Activated CD4-positive, alpha-beta T cell treated with anti-CD3 and anti-CD28 coated beads, Interleukin-2, amount 10 ng/mL, durations not matched to agents 24 days and 14 days (primary cell): ENCODE measurements at regions of chr6 and their contacts with region 1.

Region 1: DNA sequence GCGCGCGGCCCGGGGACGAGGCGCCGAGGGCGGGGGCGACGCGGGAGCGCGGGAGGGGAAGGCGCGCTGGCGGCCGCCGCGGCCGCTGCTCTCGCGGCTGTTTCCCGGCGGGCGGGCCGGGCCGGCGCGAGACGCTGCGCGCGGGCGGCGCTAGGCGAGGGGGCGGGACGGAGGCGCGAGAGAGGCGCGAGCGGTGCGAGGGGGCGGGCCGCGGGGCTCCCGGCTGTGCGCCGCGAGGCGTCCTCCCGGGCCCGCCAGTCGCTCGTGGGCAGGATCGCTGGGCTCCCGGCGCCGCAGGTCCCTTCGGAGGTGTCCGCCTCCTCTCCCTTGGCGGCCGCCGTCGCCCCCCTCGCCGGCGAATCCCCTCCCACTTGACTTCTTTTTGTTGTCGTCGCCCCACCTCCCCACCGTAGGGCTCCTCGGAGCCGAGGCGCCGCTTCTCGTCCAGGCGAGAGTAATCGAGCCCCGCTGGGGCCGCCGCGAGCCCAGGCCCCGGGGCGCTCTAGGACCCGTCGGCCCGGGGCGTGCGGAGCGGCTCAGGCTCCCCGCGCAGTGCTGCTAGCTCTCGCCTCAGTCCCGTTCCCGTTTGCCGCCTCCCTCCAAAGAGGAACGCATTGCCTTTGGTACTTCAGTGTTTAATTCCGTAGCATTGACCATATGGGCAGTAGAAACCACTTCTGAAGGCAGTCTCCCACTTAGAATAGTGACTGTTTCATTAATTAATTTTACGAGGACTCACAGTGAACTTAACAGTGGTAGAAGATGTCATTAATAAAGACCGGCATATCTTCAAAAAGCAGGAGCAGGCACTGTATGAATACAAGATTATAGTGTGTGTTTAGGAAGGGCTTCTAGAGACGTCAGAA is at the start of gene RANBP9:
- DNase-seq: peak; percentile 96
- H3K4me3 Mint-ChIP-seq: peak within 1 kb of the TSS; percentile 96
- H3K27ac Mint-ChIP-seq: peak within 1 kb of the TSS; percentile 98
- H3K4me1 Mint-ChIP-seq: peaks cover 40% of the 10 kb centered on the region
- H3K27me3 Mint-ChIP-seq: no peaks in the 10 kb centered on the region
- total RNA-seq, gene RANBP9: 52.6 and 56.2 TPM in 2 replicates

Region 2: DNA sequence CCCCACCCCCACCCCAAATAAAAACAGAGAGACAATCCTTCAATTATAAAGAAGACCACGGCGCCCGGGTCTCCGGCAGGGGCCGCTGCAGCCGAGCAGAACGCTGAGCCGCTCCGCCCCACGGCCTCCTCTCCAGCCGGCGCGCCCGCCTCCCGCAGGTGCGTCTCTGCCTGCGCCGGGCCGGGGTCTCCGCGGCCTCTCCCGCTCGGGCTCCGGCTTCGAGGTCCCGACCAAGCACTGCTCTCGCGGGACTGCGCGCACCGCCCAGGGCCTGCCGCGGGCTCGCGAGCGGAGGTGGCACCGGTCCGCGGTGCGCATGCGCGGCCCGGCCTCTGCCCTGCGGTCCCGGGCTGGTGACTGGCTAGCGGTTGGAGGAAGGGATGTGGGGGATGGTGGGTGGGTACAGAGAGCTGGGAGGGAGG is 137.8 kb before region 1 on chr6:
- intact Hi-C with region 1: loop called (anchors 1 kb)
- DNase-seq: peak; percentile 97
- H3K4me3 Mint-ChIP-seq: peak overlapping the region; percentile 97
- H3K27ac Mint-ChIP-seq: peak overlapping the region; percentile 100
- H3K4me1 Mint-ChIP-seq: peaks cover 18% of the 10 kb centered on the region
- H3K27me3 Mint-ChIP-seq: no peaks in the 10 kb centered on the region

Region 3: GRCh38 chr6:13630499-13630898 is 81.5 kb before region 1 on chr6:
- intact Hi-C with region 1: loop called (anchors 5 kb)
- DNase-seq: no peak
- H3K4me3 Mint-ChIP-seq: no peak overlapping the region
- H3K27ac Mint-ChIP-seq: peak overlapping the region; percentile 49
- H3K4me1 Mint-ChIP-seq: peaks cover 14% of the 10 kb centered on the region
- H3K27me3 Mint-ChIP-seq: no peaks in the 10 kb centered on the region

Region 4: GRCh38 chr6:13681305-13682061 is 30.5 kb before region 1 on chr6:
- intact Hi-C with region 1: loop called (anchors 2 kb)
- DNase-seq: peak; percentile 73
- H3K4me3 Mint-ChIP-seq: peak overlapping the region; percentile 60
- H3K27ac Mint-ChIP-seq: peak overlapping the region; percentile 79
- H3K4me1 Mint-ChIP-seq: peaks cover 34% of the 10 kb centered on the region
- H3K27me3 Mint-ChIP-seq: no peaks in the 10 kb centered on the region

Region 5: GRCh38 chr6:13767121-13767808 is 55.3 kb after region 1 on chr6:
- intact Hi-C with region 1: loop called (anchors 1 kb)
- DNase-seq: peak; percentile 63
- H3K4me3 Mint-ChIP-seq: peak overlapping the region; percentile 51
- H3K27ac Mint-ChIP-seq: no peak overlapping the region
- H3K4me1 Mint-ChIP-seq: peaks cover 36% of the 10 kb centered on the region
- H3K27me3 Mint-ChIP-seq: no peaks in the 10 kb centered on the region

Region 6: DNA sequence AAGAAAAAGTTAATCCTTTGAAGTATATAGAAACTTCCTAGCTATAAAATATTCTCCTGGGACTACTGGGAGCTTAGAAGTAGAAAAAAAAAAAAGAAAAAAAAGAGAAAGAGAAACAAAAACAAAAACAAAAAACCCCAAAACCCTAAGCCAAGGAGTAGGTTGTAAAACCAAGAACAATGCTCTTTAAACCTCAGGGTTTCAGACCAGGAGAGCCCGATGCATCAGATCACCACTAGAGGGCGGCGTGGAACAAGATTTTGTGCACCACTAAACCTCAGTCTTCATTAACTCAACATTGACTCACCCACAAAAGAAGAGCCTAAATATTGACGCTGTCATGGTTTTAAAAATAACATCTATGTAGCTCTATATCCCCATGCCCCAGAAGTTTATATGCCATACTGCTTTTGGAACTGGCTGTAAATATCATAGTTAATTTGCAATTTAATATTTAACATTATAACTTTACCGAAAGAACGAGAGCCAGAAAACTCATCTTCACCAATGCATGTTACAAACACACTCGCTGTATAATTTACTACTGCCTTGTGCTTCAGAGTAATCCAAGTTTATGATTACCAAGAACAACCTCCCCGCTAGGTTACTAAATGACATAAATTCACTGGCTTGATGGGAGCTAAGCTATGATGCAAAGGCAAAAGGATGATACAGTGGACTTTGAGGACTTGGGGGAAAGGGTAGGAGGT is 83.2 kb after region 1 on chr6:
- intact Hi-C with region 1: loop called (anchors 2 kb)
- DNase-seq: peak; percentile 95
- H3K4me3 Mint-ChIP-seq: no peak overlapping the region
- H3K27ac Mint-ChIP-seq: peak overlapping the region; percentile 51
- H3K4me1 Mint-ChIP-seq: peaks cover 14% of the 10 kb centered on the region
- H3K27me3 Mint-ChIP-seq: no peaks in the 10 kb centered on the region